Ovary (tissue), 10 donors: ENCODE measurements at regions of chr1 and their contacts with region 1.

Region 1: GRCh38 chr1:32619701-32620485 is 30.5 kb downstream of the ZBTB8OS start:
- DNase-seq: no peak
- H3K4me3 ChIP-seq: no peak overlapping the region
- H3K27ac ChIP-seq: no peak overlapping the region
- H3K4me1 ChIP-seq: no peaks in the 10 kb centered on the region
- H3K27me3 ChIP-seq: no peaks in the 10 kb centered on the region
- CTCF ChIP-seq: no peak
- EP300 ChIP-seq: no peak
- POLR2A ChIP-seq: no peak

Region 2: DNA sequence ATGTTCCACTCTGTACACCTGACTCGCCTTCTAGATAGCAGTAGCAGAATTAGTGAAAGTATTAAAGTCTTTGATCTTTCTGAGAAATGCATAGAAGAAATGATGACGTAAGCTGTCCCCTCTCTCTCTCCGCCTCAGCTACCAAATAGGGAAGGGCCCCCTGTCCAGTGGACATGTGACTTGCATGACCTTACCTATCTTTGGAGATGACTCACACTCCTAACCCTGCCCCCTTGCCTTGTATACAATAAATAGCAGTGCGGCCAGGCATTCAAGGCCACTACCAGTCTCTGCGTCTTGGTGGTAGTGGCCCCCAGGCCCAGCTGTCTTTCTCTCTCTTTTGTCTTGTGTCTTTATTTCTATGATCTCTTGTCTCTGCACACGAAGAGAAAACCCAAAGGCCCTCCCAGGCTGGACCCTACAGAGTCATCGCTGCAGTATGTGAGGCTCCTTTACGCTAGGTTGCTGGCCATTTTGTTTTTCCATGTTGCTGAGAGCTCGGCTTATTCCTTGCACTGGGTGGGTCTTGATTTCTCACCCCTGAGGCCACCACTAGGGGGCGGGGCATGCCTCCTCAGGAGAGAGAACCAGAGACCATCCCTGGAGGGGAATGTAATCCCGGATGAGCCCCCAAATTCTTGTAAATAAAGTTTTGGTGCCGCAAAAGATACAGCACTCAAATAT is 171.0 kb before region 1 on chr1:
- intact Hi-C with region 1: loop called in 1 of 4 experiments (anchors 10 kb)
- DNase-seq: no peak
- H3K4me3 ChIP-seq: no peak overlapping the region
- H3K27ac ChIP-seq: no peak overlapping the region
- H3K4me1 ChIP-seq: no peaks in the 10 kb centered on the region
- H3K27me3 ChIP-seq: no peaks in the 10 kb centered on the region
- CTCF ChIP-seq: no peak
- EP300 ChIP-seq: no peak
- POLR2A ChIP-seq: no peak

Region 3: GRCh38 chr1:32521165-32521564 is 98.7 kb before region 1 on chr1:
- intact Hi-C with region 1: loop called in 2 of 4 experiments (anchors 10 kb)
- DNase-seq: no peak
- H3K4me3 ChIP-seq: no peak overlapping the region
- H3K27ac ChIP-seq: no peak overlapping the region
- H3K4me1 ChIP-seq: no peaks in the 10 kb centered on the region
- H3K27me3 ChIP-seq: no peaks in the 10 kb centered on the region
- CTCF ChIP-seq: no peak
- EP300 ChIP-seq: no peak
- POLR2A ChIP-seq: no peak

Region 4: DNA sequence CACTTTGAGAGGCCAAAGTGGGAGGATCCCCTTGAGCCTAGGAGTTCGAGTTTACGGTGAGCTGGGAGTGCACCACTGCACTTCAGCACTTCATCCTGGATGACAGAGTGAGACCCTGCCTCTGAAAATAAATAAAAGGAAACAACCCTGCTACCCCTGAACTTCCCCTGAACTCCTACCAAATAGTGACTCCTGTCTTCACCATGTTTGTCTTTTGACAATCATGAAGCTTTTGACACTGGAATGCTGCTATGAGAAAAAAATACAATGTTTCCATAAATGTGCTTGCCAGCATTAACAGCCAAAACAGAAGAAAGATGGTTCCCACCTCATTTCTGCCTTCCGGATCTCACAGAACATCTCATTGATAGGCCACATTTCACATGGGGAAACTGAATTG is 70.3 kb before region 1 on chr1:
- intact Hi-C with region 1: no loop called
- DNase-seq: no peak
- H3K4me3 ChIP-seq: no peak overlapping the region
- H3K27ac ChIP-seq: no peak overlapping the region
- H3K4me1 ChIP-seq: peaks cover 2% of the 10 kb centered on the region
- H3K27me3 ChIP-seq: no peaks in the 10 kb centered on the region
- CTCF ChIP-seq: no peak
- EP300 ChIP-seq: no peak
- POLR2A ChIP-seq: no peak